ENCODE measurements at regions of chr11 and their contacts with region 1.

Region 1: GRCh38 chr11:65366340-65366773 is 11.8 kb downstream of the TIGD3 start:
- DNase-seq: no peak
- ATAC-seq: peak; percentile 38 to 71 (median 66)
- H3K4me3 ChIP-seq: no peak overlapping the region
- H3K27ac ChIP-seq: peak overlapping the region in 11 of 12 donors; percentile 19 to 77 (median 63)
- H3K4me1 ChIP-seq: peaks cover 0 to 31% (median 14%) of the 10 kb centered on the region in 12 donors
- H3K27me3 ChIP-seq: no peaks in the 10 kb centered on the region
- CTCF ChIP-seq: peak; percentile 66 to 85 (median 78)
- POLR2A ChIP-seq: no peak

Region 2: DNA sequence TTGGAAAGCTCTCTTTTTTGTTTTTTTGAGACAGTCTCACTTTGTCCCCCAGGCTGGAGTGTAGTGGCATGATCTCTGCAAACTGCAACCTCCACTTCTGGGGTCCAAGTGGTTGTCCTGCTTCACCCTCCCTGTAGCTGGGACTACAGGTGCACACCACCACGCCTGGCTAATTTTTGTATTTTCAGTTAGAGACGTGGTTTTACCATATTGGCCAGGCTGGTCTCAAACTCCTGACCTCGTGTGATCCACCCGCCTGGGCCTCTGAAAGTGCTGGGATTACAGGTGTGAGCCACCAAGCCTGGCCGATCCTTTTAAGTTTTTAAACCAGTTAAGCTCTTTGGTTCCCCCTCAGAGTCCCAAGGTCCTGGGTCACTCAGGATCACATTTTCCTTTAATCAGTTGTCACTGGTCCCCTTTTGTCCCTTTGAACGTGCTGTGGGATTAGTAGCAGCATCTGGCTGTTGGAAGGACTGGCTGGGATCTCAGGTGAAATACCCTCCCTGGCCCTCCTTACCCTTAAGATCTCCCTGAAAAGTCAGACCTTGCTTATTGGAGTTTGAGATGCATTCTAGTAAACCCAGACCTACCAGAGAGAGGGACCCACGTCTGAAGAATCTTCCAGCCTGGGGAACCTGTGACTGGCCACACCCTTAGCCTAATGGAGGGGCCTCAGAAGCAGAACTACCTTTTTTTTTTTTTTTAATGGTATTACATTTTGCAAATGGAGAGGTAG is 140.6 kb after region 1 on chr11:
- intact Hi-C with region 1: loop called in 9 of 10 experiments (anchors 1 to 5 kb)
- DNase-seq: peak in 3 of 5 donors; percentile 35 to 39 (median 38)
- ATAC-seq: peak; percentile 21 to 50 (median 43)
- H3K4me3 ChIP-seq: peak overlapping the region in 9 of 12 donors; percentile 70 to 90 (median 82)
- H3K27ac ChIP-seq: peak overlapping the region; percentile 65 to 100 (median 98)
- H3K4me1 ChIP-seq: peaks cover 0 to 57% (median 26%) of the 10 kb centered on the region in 12 donors
- H3K27me3 ChIP-seq: no peaks in the 10 kb centered on the region
- CTCF ChIP-seq: no peak
- POLR2A ChIP-seq: peak in 1 of 2 donors; percentile 35

Measured in heart left ventricle (tissue), 16 donors.